ENCODE measurements at regions of chr19 and their contacts with region 1.

Region 1: DNA sequence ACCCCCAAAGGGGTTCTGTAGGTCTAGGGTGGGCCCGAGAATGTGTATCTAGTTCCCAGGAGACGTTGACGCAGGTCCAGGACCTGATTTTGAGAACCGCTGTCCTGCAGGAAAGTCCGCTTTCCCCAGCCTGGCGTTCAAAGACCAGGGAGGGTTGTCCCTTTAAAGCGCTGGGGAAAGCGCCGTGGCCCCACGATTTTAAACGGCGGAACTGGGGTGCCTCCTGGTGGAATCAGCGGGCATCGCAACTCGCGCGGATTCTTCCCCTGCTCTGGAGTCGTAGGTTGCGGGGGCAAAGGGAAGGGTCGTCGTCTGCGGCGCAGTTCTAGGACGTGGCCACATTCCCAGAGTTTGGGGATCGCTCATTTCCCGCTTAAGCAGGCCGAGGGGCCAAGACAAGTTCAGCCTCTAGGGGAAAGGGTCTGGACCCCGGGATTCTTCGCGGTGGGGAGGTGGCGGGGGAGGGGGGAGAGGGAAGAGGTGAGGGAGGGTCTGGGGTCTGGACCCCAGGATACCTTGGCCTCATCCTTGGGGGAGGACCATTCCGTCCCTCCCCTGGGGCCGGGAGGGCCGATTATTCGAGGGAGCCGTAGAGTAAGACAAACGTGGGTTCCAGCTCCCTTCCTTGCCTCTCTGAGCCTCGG is 7.7 kb downstream of the PNMA8B start:
- DNase-seq: peak; percentile 70 to 87 (median 82)
- ATAC-seq: peak; percentile 85
- H3K4me3 ChIP-seq: no peak overlapping the region
- H3K27ac ChIP-seq: no peak overlapping the region
- H3K4me1 ChIP-seq: peaks cover 12 to 15% of the 10 kb centered on the region in 2 donors
- H3K27me3 ChIP-seq: peaks cover 26 to 73% of the 10 kb centered on the region in 2 donors
- CTCF ChIP-seq: peak; percentile 87 to 91

Region 2: GRCh38 chr19:46288896-46289588 is 198.9 kb before region 1 on chr19:
- intact Hi-C with region 1: loop called in 1 of 2 experiments (anchors 10 kb)
- DNase-seq: no peak
- ATAC-seq: peak; percentile 71
- H3K4me3 ChIP-seq: no peak overlapping the region
- H3K27ac ChIP-seq: peak overlapping the region; percentile 34 to 57
- H3K4me1 ChIP-seq: peaks cover 0 to 9% of the 10 kb centered on the region in 2 donors
- H3K27me3 ChIP-seq: no peaks in the 10 kb centered on the region
- CTCF ChIP-seq: no peak

Region 3: DNA sequence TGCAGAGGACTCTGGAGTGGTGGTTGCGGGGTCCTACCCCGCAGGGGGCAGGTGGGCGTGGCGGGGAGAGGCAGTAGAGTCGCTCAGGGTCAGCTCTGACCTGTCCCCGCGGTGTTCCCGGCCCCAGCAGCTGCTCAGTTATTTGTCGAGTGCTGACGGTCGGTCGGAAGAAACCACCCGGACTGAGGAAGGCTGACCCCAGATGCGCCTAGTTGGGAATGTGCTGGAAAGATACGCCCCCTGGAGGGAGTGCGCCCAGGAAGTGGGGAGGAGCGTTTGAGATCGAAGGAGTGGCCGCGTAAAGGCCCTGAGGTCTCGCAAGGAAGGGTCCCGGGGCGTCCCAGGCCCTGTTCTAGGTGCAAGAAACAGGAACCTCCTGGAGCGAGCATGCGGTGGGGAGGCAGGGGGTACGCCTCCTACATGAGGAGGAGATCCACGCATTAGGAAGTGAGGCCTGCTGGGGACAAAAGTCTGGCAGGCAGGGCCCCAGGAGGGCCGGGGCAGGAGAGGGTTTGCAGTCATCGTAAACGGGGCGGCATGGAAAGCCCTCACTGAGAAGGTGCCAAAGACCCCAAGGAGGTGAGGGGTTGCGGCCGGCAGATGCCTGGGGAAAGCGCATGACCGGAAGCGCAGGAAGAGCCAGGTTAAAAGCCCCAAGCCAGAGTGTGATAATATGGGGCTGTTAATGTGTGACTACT is 83.7 kb before region 1 on chr19:
- intact Hi-C with region 1: loop called in 1 of 2 experiments (anchors 5 kb)
- DNase-seq: peak in 2 of 4 donors; percentile 73 to 79
- ATAC-seq: peak; percentile 69
- H3K4me3 ChIP-seq: peak overlapping the region; percentile 16 to 30
- H3K27ac ChIP-seq: peak overlapping the region in 1 of 2 donors; percentile 37
- H3K4me1 ChIP-seq: peaks cover 10 to 26% of the 10 kb centered on the region in 2 donors
- H3K27me3 ChIP-seq: peaks cover 8 to 94% of the 10 kb centered on the region in 2 donors
- CTCF ChIP-seq: no peak

Region 4: GRCh38 chr19:46542428-46543230 is 54.7 kb after region 1 on chr19:
- intact Hi-C with region 1: no loop called
- DNase-seq: peak; percentile 74 to 89 (median 89)
- ATAC-seq: peak; percentile 92
- H3K4me3 ChIP-seq: no peak overlapping the region
- H3K27ac ChIP-seq: no peak overlapping the region
- H3K4me1 ChIP-seq: peaks cover 0 to 6% of the 10 kb centered on the region in 2 donors
- H3K27me3 ChIP-seq: no peaks in the 10 kb centered on the region
- CTCF ChIP-seq: peak; percentile 85 to 91

Region 5: DNA sequence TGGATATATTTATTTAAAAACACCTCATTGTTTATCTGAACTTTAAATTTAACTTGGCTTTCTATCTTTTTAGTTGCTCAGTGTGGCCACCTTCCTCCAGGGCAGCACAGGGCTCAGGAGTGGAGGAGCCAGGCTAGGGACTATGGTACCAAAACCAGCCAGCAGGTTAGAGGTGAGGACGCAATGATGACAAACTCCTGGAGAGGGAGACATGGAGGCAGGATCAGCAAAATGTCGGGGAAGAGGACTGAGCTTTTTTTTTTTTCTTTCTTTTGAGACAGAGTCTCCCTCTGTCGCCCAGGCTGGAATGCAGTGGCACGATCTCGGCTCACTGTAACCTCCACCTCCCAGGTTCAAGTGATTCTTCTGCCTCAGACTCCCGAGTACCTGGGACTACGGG is 83.6 kb after region 1 on chr19:
- intact Hi-C with region 1: no loop called
- DNase-seq: no peak
- ATAC-seq: no peak
- H3K4me3 ChIP-seq: no peak overlapping the region
- H3K27ac ChIP-seq: no peak overlapping the region
- H3K4me1 ChIP-seq: no peaks in the 10 kb centered on the region
- H3K27me3 ChIP-seq: no peaks in the 10 kb centered on the region
- CTCF ChIP-seq: no peak